GM12878 (cell line): ENCODE measurements at regions of chrX and their contacts with region 1.

Region 1: DNA sequence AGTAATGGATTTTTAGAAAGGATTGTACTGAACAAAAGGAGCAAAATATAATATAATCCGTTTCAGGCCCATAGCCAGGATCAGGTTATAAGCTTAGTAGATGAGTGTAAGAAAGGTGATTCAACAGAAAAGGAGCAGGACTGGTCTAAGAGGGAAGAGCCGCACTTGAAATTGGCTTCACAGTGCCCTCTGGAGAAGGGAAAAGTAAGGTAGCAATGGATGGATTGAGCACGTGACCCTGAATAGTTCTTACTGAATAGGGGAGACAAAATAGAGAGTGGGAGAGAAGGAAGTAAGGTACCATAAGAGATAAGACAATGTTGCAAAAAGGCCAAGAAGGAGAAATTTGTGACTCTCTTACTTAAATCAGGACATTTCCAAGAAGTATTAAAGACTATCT is 15.6 kb downstream of the CXorf66 start:
- DNase-seq: no peak
- ATAC-seq: no peak
- H3K4me3 ChIP-seq: no peak overlapping the region
- H3K27ac ChIP-seq: no peak overlapping the region
- H3K4me1 ChIP-seq: no peaks in the 10 kb centered on the region
- H3K27me3 ChIP-seq: no peaks in the 10 kb centered on the region
- CTCF ChIP-seq: no peak
- EP300 ChIP-seq: no peak
- POLR2A ChIP-seq: no peak
- RAD21 ChIP-seq: no peak

Region 2: DNA sequence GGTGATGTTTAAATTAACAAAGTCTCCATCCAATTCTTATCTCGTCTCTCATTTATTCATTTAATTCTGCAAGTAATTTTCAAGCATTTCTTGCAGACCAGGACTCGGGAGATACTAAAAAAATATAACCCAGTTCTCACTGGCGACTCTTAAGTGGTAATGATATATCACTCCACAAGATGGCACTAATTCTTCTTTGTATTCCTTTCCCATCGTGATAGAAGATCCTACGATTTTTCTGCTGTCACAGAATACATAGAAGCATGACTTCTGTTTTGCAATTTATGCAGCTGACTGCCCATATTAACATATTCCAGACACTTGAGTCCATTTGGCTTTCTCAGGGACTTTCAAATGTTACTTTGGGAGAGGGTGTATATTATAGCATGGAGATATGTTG is 1174.2 kb before region 1 on chrX:
- CTCF ChIA-PET with region 1: no interaction called
- POLR2A ChIA-PET with region 1: no interaction called
- RAD21 ChIA-PET with region 1: no interaction called
- SMC1A ChIA-PET with region 1: no interaction called
- in situ Hi-C with region 1: loop called (anchors 10 kb)
- intact Hi-C with region 1: no loop called
- DNase-seq: no peak
- ATAC-seq: peak; percentile 57
- H3K4me3 ChIP-seq: no peak overlapping the region
- H3K27ac ChIP-seq: no peak overlapping the region
- H3K4me1 ChIP-seq: no peaks in the 10 kb centered on the region
- H3K27me3 ChIP-seq: no peaks in the 10 kb centered on the region; a peak in 2 of 4 replicates
- CTCF ChIP-seq: peak; percentile 17 to 36 (median 18); a peak in 3 of 6 replicates
- EP300 ChIP-seq: no peak
- POLR2A ChIP-seq: no peak
- RAD21 ChIP-seq: peak; percentile 44

Region 3: DNA sequence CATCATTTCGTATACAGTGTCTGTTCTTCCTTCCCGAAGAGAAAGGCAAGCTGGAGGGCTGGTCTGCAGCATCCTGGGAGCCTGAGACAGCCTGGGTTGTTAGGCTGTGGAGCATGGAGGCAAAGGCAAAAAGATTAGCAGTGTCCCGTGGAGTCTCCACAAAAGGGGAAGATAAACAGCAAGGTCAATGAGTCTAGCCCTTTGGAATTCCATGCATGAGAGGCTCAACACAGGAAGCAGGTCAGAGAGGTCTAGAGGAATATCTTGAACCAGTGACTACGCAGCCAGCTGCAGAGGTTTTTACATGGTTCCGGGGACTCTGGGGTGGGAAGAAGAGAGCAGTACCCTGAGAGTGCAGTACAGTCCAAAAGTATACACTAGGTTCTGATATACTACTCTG is 229.6 kb before region 1 on chrX:
- CTCF ChIA-PET with region 1: no interaction called
- POLR2A ChIA-PET with region 1: no interaction called
- RAD21 ChIA-PET with region 1: no interaction called
- SMC1A ChIA-PET with region 1: no interaction called
- in situ Hi-C with region 1: no loop called
- intact Hi-C with region 1: no loop called
- DNase-seq: no peak
- ATAC-seq: no peak
- H3K4me3 ChIP-seq: no peak overlapping the region
- H3K27ac ChIP-seq: no peak overlapping the region
- H3K4me1 ChIP-seq: no peaks in the 10 kb centered on the region
- H3K27me3 ChIP-seq: no peaks in the 10 kb centered on the region
- CTCF ChIP-seq: no peak
- EP300 ChIP-seq: no peak
- POLR2A ChIP-seq: no peak
- RAD21 ChIP-seq: no peak

Region 4: GRCh38 chrX:139914421-139914820 is 35.3 kb before region 1 on chrX:
- CTCF ChIA-PET with region 1: no interaction called
- POLR2A ChIA-PET with region 1: no interaction called
- RAD21 ChIA-PET with region 1: no interaction called
- SMC1A ChIA-PET with region 1: no interaction called
- in situ Hi-C with region 1: no loop called
- intact Hi-C with region 1: no loop called
- DNase-seq: no peak
- ATAC-seq: no peak
- H3K4me3 ChIP-seq: no peak overlapping the region
- H3K27ac ChIP-seq: no peak overlapping the region
- H3K4me1 ChIP-seq: no peaks in the 10 kb centered on the region; the same call in none of the 2 replicates
- H3K27me3 ChIP-seq: no peaks in the 10 kb centered on the region
- CTCF ChIP-seq: no peak
- EP300 ChIP-seq: no peak
- POLR2A ChIP-seq: no peak
- RAD21 ChIP-seq: no peak